Cardiac septum (tissue), 1 donor: ENCODE measurements at regions of chr22 and their contacts with region 1.

Region 1: DNA sequence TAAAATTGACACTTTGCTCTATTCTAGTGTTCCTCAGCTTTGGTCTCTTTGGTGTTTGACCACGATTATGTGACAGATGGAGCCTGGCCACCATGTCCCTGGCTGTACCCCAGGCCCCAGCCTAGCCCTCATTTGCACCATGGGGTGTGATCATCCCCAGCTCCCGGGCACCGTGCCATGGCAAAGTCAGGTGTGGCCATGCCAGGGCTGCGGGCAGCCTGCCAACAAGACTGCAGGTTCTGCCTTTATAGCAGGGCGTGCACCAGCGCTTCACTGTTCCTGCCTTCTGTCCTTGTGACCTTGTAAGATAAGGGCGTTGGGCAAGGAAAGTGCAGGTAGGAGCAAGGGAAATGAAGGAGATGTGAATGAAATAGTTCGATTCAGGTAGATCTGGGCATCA is 22.4 kb upstream of the APOBEC3A start:
- DNase-seq: peak; percentile 74

Region 2: DNA sequence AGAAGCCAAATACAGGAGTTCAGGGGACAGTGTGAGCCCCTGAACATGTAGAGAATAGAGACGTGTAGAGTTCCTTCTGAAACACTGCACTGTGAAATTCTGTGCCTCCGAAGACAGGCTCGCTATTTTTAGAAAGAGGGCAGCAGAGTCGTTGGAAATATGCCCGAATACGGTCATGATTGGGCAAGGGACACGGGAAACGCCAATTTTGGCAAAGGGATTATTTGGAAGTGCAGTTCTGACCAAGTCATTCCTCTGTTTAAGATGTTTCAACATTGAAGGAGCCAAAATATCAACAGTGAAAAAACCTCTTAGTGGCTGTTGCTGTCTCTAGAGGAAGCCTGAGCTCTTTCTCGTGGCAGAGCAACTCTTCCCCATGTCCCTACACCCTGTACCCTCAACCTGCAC is 53.6 kb before region 1 on chr22:
- intact Hi-C with region 1: no loop called
- DNase-seq: no peak

Region 3: DNA sequence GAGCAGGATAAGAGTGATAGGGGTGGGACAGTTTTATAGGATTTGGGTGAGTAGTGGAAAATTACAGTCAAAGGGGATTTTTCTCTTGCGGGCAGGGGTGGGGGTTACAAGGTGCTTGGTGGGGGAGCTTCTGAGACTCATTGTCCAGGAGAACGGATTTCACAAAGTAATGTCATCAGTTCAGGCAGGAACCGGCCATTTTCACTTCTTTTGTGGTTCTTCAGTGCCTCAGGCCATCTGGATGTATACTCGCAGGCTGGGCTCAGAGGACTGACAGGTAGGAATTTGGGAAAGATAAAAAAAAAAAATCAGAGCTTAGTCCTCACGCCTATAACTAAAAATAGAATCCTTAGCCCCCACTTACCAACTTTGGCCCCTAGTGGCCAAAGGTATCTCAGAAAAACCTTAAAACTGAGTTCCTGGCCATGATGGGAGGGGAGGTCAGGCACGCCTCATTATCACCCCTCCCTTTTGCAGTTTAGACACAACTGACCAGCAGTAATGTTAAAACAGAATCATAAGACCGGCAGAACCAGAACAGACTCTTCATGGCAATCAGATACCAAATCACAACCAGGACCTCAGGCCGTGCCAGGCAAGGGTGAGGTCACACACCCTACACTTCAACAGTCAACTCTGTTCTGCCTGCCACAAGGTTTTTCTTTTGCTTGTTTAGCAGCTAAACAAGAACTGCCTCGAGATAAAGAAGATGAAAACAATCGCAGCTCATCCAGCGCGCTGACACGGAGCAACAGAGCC is 133.2 kb after region 1 on chr22:
- intact Hi-C with region 1: no loop called
- DNase-seq: no peak

Region 4: GRCh38 chr22:39117585-39118191 is 182.7 kb after region 1 on chr22:
- intact Hi-C with region 1: loop called (anchors 10 kb)
- DNase-seq: no peak